Thyroid gland (tissue), 4 donors: ENCODE measurements at regions of chr11 and their contacts with region 1.

Region 1: GRCh38 chr11:18321980-18322711 is at the starts of genes GTF2H1 and HPS5:
- DNase-seq: peak; percentile 96
- H3K4me3 ChIP-seq: peak within 1 kb of the TSS; percentile 84 to 100 (median 91)
- H3K27ac ChIP-seq: peak within 1 kb of the TSS; percentile 98 to 100 (median 98)
- H3K4me1 ChIP-seq: peaks cover 27 to 32% of the 10 kb centered on the region in 2 donors
- H3K27me3 ChIP-seq: no peaks in the 10 kb centered on the region
- CTCF ChIP-seq: no peak
- POLR2A ChIP-seq: peak in 1 of 2 donors; percentile 85
- total RNA-seq, gene GTF2H1: 61.9 to 81.4 (median 72.4) TPM
- total RNA-seq, gene HPS5: 21.0 to 26.7 (median 24.2) TPM

Region 2: DNA sequence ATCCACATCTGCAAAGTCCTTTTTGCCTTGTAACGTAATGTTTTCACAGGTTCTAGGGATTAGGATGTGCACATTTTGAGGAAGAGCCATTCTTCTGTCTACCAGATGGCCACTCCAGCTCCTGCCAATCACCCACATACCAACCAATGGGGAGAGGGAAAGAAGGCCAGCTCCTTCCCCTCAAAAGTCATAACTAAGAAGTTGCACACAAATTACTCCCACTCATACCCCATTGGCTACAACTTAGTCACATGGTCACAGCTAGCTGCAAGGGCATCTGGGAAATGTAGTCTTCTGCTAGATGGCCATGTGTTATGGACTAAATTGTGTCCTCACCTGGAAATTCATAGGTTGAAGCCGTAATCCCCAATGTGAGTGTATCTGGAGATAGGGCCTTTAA is 618.2 kb before region 1 on chr11:
- intact Hi-C with region 1: no loop called
- DNase-seq: no peak
- H3K4me3 ChIP-seq: no peak overlapping the region
- H3K27ac ChIP-seq: no peak overlapping the region
- H3K4me1 ChIP-seq: no peaks in the 10 kb centered on the region
- H3K27me3 ChIP-seq: no peaks in the 10 kb centered on the region
- CTCF ChIP-seq: no peak
- POLR2A ChIP-seq: no peak

Region 3: DNA sequence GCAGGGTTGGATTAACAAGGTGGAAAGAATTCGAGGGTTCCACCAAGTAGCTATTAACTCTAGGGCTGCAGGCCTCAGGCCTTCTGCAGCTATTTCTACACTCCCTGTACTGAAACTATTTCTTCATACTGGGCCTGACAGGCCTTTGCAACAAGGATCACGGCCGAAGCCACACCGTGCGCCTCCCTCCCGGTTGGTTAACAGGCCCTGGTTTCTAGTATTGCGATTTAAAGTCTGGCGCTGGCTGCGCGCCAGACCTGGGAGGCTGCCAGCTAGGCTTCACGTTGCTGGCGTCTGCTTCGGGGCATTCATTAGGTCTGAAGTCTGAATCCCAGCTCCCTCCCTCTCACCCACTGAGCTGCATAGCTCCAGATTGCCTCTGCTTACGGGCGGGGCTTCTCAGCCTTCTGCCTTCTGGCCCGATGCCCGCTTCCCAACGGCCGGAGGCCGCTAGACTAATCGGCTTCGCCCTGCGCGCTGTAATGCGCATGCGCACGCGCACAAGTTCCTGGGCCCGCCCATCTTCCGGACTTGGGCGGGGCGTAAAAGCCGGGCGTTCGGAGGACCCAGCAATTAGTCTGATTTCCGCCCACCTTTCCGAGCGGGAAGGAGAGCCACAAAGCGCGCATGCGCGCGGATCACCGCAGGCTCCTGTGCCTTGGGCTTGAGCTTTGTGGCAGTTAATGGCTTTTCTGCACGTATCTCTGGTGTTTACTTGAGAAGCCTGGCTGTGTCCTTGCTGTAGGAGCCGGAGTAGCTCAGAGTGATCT is 73.8 kb after region 1 on chr11:
- intact Hi-C with region 1: loop called (anchors 5 kb)
- DNase-seq: peak; percentile 99
- H3K4me3 ChIP-seq: peak overlapping the region; percentile 74 to 90 (median 80)
- H3K27ac ChIP-seq: peak overlapping the region; percentile 88 to 98 (median 97)
- H3K4me1 ChIP-seq: peaks cover 12 to 14% of the 10 kb centered on the region in 2 donors
- H3K27me3 ChIP-seq: no peaks in the 10 kb centered on the region
- CTCF ChIP-seq: peak in 1 of 6 experiments; percentile 4
- POLR2A ChIP-seq: peak in 1 of 2 donors; percentile 86